ENCODE measurements at regions of chr16 and their contacts with region 1.

Region 1: DNA sequence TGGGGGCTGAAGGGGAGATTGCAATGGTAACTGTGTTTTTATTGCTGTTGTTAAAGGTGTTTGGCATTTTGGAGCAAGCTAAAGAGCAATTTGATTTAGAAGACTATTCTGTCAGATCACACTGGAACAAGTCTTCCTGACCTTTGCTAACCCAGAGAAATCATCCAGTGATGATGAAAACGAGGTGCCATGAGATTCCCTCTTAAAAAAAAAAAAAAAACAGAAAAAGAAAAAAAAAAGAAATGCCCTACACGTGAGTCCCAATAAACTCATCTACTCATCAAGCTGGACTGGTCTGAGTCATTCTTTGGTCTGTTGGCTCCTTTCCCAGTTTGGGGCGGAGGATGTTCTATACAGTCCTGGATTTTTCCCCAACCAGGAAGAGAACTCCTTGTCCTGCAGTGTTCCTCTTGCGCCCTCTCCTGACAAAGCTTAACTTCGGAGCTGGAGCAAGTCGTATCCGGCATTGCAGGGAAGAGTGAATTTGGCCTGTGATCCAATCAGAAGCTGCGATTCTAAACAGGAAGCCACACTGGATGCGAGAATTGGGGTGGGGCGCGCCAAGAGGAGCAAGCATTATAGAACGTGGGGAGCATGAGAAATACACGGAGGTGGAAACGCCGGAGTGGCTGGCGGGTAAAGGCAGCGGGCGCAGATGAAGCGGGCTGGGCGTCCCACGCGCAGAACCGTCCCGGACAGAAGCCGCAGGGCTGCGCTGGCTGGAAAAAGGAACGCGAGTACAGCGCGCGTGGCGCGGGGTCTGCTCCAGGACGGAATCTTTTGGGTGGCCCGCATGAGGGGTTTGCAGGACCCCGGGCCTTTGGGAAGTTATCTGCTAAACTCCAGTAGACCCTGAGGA is 22.4 kb upstream of the CRYM start:
- DNase-seq: peak; percentile 92 to 95
- H3K4me3 ChIP-seq: peak overlapping the region; percentile 65
- H3K4me3 Mint-ChIP-seq: peak overlapping the region; percentile 97
- H3K27ac Mint-ChIP-seq: peak overlapping the region; percentile 82
- H3K4me1 ChIP-seq: peaks cover 12% of the 10 kb centered on the region
- H3K4me1 Mint-ChIP-seq: peaks cover 8% of the 10 kb centered on the region
- H3K27me3 ChIP-seq: no peaks in the 10 kb centered on the region
- H3K27me3 Mint-ChIP-seq: no peaks in the 10 kb centered on the region
- CTCF ChIP-seq: peak; percentile 71 to 89

Region 2: GRCh38 chr16:21158208-21159110 is 142.1 kb before region 1 on chr16 and contains the start of gene LDAF1:
- CTCF ChIA-PET with region 1: interaction called, 39 read pairs
- POLR2A ChIA-PET with region 1: interaction called, 4 read pairs
- intact Hi-C with region 1: loop called (anchors 1 kb)
- DNase-seq: peak; percentile 80 to 86
- H3K4me3 ChIP-seq: peak within 1 kb of the TSS; percentile 74
- H3K4me3 Mint-ChIP-seq: peak within 1 kb of the TSS; percentile 99
- H3K27ac Mint-ChIP-seq: no peak within 1 kb of the TSS
- H3K4me1 ChIP-seq: no peaks in the 10 kb centered on the region
- H3K4me1 Mint-ChIP-seq: no peaks in the 10 kb centered on the region
- H3K27me3 ChIP-seq: no peaks in the 10 kb centered on the region
- H3K27me3 Mint-ChIP-seq: no peaks in the 10 kb centered on the region
- CTCF ChIP-seq: no peak
- total RNA-seq, gene LDAF1: 12.9 and 16.7 TPM in 2 replicates

Region 3: DNA sequence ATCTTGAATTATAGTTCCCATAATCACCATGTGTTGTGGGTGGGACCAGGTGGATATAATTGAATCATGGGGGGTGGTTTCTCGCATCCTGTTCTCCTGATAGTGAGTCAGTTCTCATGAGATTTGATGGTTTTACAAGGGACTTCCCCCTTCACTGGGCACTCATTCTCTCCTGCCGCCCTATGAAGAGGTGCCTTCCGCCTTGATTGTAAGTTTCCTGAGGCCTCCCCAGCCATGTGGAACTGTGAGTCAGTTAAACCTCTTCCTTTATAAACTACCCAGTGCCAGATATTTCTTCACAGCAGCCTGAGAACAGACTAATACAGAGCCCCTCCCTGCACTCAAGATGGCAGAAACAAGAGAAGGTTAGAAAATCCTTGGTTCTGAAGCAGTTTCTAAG is 115.7 kb before region 1 on chr16:
- CTCF ChIA-PET with region 1: interaction called, 60 read pairs
- POLR2A ChIA-PET with region 1: no interaction called
- intact Hi-C with region 1: loop called (anchors 1 kb)
- DNase-seq: no peak
- H3K4me3 ChIP-seq: no peak overlapping the region
- H3K4me3 Mint-ChIP-seq: no peak overlapping the region
- H3K27ac Mint-ChIP-seq: no peak overlapping the region
- H3K4me1 ChIP-seq: peaks cover 3% of the 10 kb centered on the region; the same call in 1 of the 2 replicates
- H3K4me1 Mint-ChIP-seq: no peaks in the 10 kb centered on the region
- H3K27me3 ChIP-seq: no peaks in the 10 kb centered on the region
- H3K27me3 Mint-ChIP-seq: no peaks in the 10 kb centered on the region
- CTCF ChIP-seq: no peak

Region 4: GRCh38 chr16:21190599-21190998 is 109.9 kb before region 1 on chr16:
- CTCF ChIA-PET with region 1: interaction called, 60 read pairs
- POLR2A ChIA-PET with region 1: no interaction called
- intact Hi-C with region 1: loop called (anchors 1 kb)
- DNase-seq: no peak
- H3K4me3 ChIP-seq: no peak overlapping the region
- H3K4me3 Mint-ChIP-seq: no peak overlapping the region
- H3K27ac Mint-ChIP-seq: no peak overlapping the region
- H3K4me1 ChIP-seq: peaks cover 3% of the 10 kb centered on the region; the same call in 1 of the 2 replicates
- H3K4me1 Mint-ChIP-seq: no peaks in the 10 kb centered on the region
- H3K27me3 ChIP-seq: no peaks in the 10 kb centered on the region; the same call in 1 of the 2 replicates
- H3K27me3 Mint-ChIP-seq: no peaks in the 10 kb centered on the region
- CTCF ChIP-seq: no peak

Region 5: DNA sequence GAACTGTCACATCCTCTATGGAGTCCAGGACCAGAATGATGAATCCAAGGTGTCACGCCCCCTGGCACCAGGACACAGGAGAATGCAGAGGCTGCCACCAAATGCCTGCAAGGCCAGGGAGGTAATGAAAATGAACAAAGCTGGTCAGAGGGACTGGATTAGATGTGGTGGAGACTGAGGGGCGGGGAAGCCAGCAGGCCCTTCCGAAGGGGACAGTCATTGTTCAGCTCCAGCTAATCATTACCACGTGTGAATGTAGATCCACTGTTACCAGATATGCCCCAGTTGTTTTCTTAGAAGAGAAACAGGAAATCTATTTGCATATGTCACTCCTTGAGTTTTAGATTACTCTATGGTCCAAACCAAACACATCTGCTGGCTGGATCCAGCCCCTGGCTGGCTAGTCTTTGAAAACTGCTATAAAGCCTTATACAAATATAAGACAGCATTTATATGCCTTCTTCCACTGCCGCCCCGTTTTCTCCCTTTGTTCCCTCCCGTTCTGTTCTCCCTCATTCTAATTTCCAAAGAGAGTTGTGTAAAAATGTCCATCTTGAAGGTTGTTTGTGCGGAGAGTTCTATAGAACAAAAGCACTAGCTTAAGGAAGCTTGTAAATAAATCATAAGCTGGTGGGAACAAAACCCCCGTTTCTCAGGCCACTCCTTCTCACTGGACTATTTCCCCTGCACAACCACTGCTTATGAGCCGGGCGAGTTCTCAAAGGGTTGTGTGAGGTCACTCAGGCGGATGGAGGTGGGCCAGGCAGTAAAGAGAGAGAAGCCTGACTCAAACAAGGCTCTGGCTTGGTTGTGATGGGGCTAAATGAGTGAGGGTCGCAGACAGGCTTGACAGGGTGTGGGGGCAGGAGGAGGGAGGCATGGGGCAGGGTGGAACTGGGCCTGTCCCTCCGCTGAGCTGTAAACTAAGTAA is 36.6 kb before region 1 on chr16:
- CTCF ChIA-PET with region 1: interaction called, 7 read pairs
- POLR2A ChIA-PET with region 1: no interaction called
- intact Hi-C with region 1: loop called (anchors 5 kb)
- DNase-seq: peak in 1 of 2 experiments; percentile 11
- H3K4me3 ChIP-seq: no peak overlapping the region
- H3K4me3 Mint-ChIP-seq: no peak overlapping the region
- H3K27ac Mint-ChIP-seq: peak overlapping the region; percentile 22
- H3K4me1 ChIP-seq: peaks cover 30% of the 10 kb centered on the region
- H3K4me1 Mint-ChIP-seq: peaks cover 21% of the 10 kb centered on the region
- H3K27me3 ChIP-seq: no peaks in the 10 kb centered on the region
- H3K27me3 Mint-ChIP-seq: no peaks in the 10 kb centered on the region
- CTCF ChIP-seq: no peak

Region 6: DNA sequence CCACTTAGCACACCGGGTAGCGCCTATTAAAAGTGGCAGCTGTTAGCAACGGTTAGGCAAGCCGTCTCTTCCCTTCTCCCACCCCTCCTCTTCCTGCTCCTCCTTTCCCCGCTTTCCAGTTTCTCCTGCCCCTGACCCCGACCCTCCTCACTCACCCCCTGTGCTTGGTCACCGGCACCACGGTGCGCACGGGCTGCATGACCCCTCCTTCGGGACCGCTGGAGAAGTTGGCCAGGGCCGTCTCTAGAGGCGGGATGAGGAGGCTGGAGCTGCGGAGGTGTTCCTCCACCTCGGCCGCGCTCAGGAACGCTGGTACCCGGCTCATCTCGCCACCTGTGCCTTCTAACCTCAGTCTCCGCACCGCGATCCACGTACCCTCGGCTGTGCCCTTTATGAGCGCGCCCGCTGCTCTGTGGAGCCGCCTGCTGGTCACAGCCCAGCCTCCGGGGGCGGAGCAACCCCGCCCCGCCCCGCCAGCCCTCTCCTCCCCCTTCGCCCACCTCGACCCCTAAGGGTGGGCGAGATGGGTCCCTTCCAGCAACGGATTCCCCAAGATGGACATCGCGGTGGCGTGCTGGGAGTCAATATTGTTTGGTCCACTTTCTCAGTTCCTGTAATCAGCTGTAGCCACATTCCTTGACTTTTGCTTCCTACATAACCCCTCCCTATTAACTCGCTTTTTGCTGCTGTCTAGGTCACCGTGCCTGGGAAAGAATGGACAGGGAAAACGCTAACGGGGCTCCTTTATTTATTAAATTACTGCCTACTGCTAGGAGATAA is 22.4 kb before region 1 on chr16 and contains the start of gene CRYM:
- CTCF ChIA-PET with region 1: interaction called, 10 read pairs
- POLR2A ChIA-PET with region 1: interaction called, 3 read pairs
- intact Hi-C with region 1: loop called (anchors 2 kb)
- DNase-seq: peak; percentile 54 to 71
- H3K4me3 ChIP-seq: peak within 1 kb of the TSS; percentile 34
- H3K4me3 Mint-ChIP-seq: peak within 1 kb of the TSS; percentile 75
- H3K27ac Mint-ChIP-seq: no peak within 1 kb of the TSS
- H3K4me1 ChIP-seq: no peaks in the 10 kb centered on the region
- H3K4me1 Mint-ChIP-seq: no peaks in the 10 kb centered on the region
- H3K27me3 ChIP-seq: no peaks in the 10 kb centered on the region
- H3K27me3 Mint-ChIP-seq: peaks cover 6% of the 10 kb centered on the region
- CTCF ChIP-seq: peak; percentile 73 to 89
- total RNA-seq, gene CRYM: 0.39 TPM in 1 of 2 replicates, not detected in the other

Region 7: DNA sequence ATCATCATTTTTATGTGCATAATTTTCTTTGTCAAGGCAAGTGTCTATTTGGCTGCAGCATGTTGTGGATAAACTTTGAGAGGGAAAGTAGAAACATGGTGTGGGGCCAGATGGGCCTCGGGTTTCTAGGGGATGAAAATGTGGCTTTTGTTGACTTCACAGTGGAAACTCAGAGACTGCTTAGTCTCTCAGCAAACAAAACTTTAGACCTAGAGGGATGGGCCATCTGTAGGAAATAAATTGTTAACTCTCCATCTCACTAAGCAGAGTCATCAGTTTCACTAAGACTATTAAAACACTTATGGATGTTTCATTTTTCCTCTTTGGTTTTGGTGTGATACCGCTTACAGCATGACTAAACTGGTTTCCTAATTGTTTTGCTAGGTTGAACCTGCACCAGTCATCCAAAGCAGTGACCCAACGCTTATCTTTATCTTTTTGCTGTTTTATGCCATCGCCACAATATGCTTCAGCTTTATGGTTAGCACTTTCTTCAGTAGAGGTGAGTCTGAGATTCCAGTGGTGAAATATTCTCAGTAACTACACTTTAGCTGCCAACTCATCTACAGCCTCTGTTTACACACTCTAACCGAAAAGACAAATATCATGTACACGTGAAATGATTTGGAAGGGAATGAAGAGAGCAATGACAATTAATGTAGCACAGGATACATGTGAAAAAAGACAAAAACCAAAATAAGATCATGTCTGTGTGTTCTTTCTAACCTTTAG is 38.2 kb after region 1 on chr16:
- CTCF ChIA-PET with region 1: no interaction called
- POLR2A ChIA-PET with region 1: no interaction called
- intact Hi-C with region 1: no loop called
- DNase-seq: peak in 1 of 2 experiments; percentile 3
- H3K4me3 ChIP-seq: no peak overlapping the region
- H3K4me3 Mint-ChIP-seq: no peak overlapping the region
- H3K27ac Mint-ChIP-seq: no peak overlapping the region
- H3K4me1 ChIP-seq: no peaks in the 10 kb centered on the region
- H3K4me1 Mint-ChIP-seq: no peaks in the 10 kb centered on the region
- H3K27me3 ChIP-seq: no peaks in the 10 kb centered on the region
- H3K27me3 Mint-ChIP-seq: peaks cover under 1% of the 10 kb centered on the region
- CTCF ChIP-seq: no peak